Calu3 (cell line): ENCODE measurements at regions of chr3 and their contacts with region 1.

Region 1: GRCh38 chr3:171944511-171944952 is 94.8 kb upstream of the FNDC3B start:
- DNase-seq: peak; percentile 17
- H3K4me3 Mint-ChIP-seq: no peak overlapping the region
- H3K27ac Mint-ChIP-seq: peak overlapping the region; percentile 32
- H3K4me1 Mint-ChIP-seq: peaks cover 51% of the 10 kb centered on the region
- H3K27me3 Mint-ChIP-seq: no peaks in the 10 kb centered on the region
- CTCF ChIP-seq: no peak

Region 2: GRCh38 chr3:171994646-171995428 is 50.3 kb after region 1 on chr3:
- CTCF ChIA-PET with region 1: no interaction called
- intact Hi-C with region 1: loop called (anchors 2 kb)
- DNase-seq: no peak
- H3K4me3 Mint-ChIP-seq: no peak overlapping the region
- H3K27ac Mint-ChIP-seq: no peak overlapping the region
- H3K4me1 Mint-ChIP-seq: peaks cover 35% of the 10 kb centered on the region
- H3K27me3 Mint-ChIP-seq: no peaks in the 10 kb centered on the region
- CTCF ChIP-seq: no peak

Region 3: GRCh38 chr3:172021164-172021563 is 76.6 kb after region 1 on chr3:
- CTCF ChIA-PET with region 1: no interaction called
- intact Hi-C with region 1: no loop called
- DNase-seq: no peak
- H3K4me3 Mint-ChIP-seq: no peak overlapping the region
- H3K27ac Mint-ChIP-seq: no peak overlapping the region
- H3K4me1 Mint-ChIP-seq: no peaks in the 10 kb centered on the region
- H3K27me3 Mint-ChIP-seq: no peaks in the 10 kb centered on the region
- CTCF ChIP-seq: no peak

Region 4: DNA sequence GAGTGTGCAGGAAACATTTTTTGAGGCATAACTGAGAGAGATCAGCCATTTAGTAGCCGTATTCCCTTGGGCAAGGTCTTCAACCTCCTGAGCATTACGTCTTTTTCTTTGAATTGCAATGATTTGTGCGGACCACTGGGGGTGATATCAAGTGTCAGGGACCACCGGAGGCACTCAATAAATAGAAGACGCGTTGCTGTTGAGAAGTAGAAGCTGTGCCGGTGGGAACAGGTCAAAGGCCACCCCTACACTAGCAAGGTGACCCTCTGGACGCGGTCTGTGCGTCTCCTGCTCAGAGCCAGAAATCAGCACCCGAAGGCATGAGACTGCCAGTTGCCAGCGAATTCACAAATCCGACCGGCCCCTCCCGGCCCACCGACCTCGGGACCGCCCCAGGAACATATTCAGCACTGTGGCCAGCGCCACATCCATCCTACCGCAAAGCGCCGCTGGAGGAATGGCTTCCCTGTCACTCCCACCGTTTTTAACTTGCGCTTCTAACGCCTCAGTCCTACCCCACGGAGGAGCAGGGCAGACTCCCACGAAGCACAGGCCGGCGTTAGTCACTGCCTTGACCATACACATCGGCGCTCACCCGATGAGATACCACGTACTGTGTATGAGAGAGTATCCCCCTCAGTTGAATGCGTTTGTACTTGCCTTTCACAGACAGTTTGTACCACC is 505.1 kb after region 1 on chr3:
- CTCF ChIA-PET with region 1: no interaction called
- intact Hi-C with region 1: no loop called
- DNase-seq: peak; percentile 46
- H3K4me3 Mint-ChIP-seq: no peak overlapping the region
- H3K27ac Mint-ChIP-seq: no peak overlapping the region
- H3K4me1 Mint-ChIP-seq: no peaks in the 10 kb centered on the region
- H3K27me3 Mint-ChIP-seq: peaks cover 35% of the 10 kb centered on the region
- CTCF ChIP-seq: no peak